ENCODE measurements at regions of chr2 and their contacts with region 1.

Region 1: DNA sequence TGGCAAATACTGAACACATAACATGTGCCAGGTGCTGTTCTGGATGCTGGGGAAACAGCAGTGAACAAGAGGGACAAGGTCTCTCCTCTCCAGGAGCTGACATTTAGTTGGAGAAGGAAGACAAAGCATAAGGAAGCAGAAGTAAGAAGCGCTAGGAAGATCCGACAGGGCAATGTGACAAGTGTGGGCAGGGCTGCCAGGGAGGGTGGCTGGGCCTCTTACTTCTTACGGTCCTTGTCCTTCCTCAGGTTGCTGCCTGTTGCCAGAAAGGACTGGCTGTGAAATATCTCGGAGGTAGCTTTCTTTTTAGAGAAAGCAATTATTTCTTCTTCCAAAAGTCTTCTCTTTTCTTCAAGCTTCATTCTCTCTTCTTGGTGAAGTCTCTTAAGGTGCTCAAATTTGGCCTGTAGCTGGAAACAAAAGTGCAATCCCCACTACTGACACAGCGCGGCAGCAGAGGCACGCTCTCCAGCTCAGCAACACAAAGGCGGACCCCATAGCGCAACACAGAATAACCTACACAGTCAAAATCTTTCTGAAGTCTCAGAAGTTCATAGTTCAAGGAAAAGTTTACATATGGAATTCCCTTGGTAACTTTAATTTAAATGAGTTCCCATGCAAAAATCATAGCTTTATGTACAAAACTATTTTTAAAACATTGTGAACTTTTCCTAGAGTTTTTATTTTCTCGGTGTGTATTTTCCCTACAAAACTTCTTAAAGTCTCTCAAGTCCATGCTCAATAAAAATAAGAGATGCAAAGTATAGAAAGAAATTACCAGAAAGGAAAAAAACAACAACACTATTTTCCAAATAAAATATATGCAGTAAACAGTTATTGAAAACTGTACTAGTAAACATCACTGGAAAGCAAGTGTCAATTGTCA is 67.7 kb downstream of the SEPTIN10 start:
- DNase-seq: peak; percentile 73
- H3K4me3 ChIP-seq: no peak overlapping the region
- H3K27ac ChIP-seq: no peak overlapping the region
- H3K4me1 ChIP-seq: no peaks in the 10 kb centered on the region
- H3K27me3 ChIP-seq: no peaks in the 10 kb centered on the region
- CTCF ChIP-seq: peak; percentile 71

Region 2: GRCh38 chr2:109736177-109736827 is 190.2 kb after region 1 on chr2:
- intact Hi-C with region 1: loop called (anchors 5 kb)
- DNase-seq: peak; percentile 67
- H3K4me3 ChIP-seq: no peak overlapping the region
- H3K27ac ChIP-seq: no peak overlapping the region
- H3K4me1 ChIP-seq: no peaks in the 10 kb centered on the region
- H3K27me3 ChIP-seq: no peaks in the 10 kb centered on the region
- CTCF ChIP-seq: peak; percentile 58